HepG2 (cell line): ENCODE measurements at regions of chr2 and their contacts with region 1.

Region 1: DNA sequence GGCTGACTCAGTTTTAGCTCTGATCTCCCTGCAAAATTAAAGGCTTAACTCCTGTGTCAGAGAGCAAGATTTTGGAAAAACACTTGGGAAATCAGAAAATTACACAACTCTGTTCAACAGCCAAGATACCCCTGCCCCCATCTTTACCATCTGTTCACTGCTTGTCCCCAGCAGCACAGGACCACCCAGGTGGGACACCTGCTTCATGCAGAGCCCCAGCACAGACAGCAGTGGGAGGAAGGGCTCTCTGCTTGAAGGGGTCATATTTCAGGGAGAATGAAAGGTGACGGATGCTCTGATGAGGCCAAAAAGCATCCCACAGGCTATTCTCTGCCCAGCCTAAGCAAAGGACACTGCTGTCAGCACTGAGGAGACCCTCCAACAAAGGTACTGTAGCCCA is 584.6 kb upstream of the KLHL29 start:
- DNase-seq: no peak
- ATAC-seq: no peak
- H3K4me3 ChIP-seq: no peak overlapping the region
- H3K27ac ChIP-seq: no peak overlapping the region
- H3K4me1 ChIP-seq: no peaks in the 10 kb centered on the region
- H3K27me3 ChIP-seq: no peaks in the 10 kb centered on the region
- CTCF ChIP-seq: no peak
- EP300 ChIP-seq: no peak
- POLR2A ChIP-seq: no peak
- RAD21 ChIP-seq: no peak

Region 2: GRCh38 chr2:22904126-22904684 is 103.8 kb after region 1 on chr2:
- CTCF ChIA-PET with region 1: no interaction called
- POLR2A ChIA-PET with region 1: no interaction called
- in situ Hi-C with region 1: no loop called
- intact Hi-C with region 1: no loop called
- DNase-seq: peak; percentile 10
- ATAC-seq: peak; percentile 80
- H3K4me3 ChIP-seq: no peak overlapping the region
- H3K27ac ChIP-seq: no peak overlapping the region
- H3K4me1 ChIP-seq: no peaks in the 10 kb centered on the region
- H3K27me3 ChIP-seq: no peaks in the 10 kb centered on the region
- CTCF ChIP-seq: peak; percentile 59
- EP300 ChIP-seq: no peak
- POLR2A ChIP-seq: no peak
- RAD21 ChIP-seq: no peak

Region 3: GRCh38 chr2:23351388-23352141 is 551.2 kb after region 1 on chr2:
- CTCF ChIA-PET with region 1: no interaction called
- POLR2A ChIA-PET with region 1: no interaction called
- in situ Hi-C with region 1: no loop called
- intact Hi-C with region 1: loop called (anchors 5 kb)
- DNase-seq: peak; percentile 37
- ATAC-seq: peak; percentile 99
- H3K4me3 ChIP-seq: no peak overlapping the region
- H3K27ac ChIP-seq: no peak overlapping the region
- H3K4me1 ChIP-seq: no peaks in the 10 kb centered on the region
- H3K27me3 ChIP-seq: peaks cover 0 to 8% of the 10 kb centered on the region in 2 experiments; a peak in 2 of 5 replicates
- CTCF ChIP-seq: peak; percentile 95
- EP300 ChIP-seq: no peak
- POLR2A ChIP-seq: no peak
- RAD21 ChIP-seq: peak; percentile 86